ENCODE measurements at regions of chr5 and their contacts with region 1.

Region 1: DNA sequence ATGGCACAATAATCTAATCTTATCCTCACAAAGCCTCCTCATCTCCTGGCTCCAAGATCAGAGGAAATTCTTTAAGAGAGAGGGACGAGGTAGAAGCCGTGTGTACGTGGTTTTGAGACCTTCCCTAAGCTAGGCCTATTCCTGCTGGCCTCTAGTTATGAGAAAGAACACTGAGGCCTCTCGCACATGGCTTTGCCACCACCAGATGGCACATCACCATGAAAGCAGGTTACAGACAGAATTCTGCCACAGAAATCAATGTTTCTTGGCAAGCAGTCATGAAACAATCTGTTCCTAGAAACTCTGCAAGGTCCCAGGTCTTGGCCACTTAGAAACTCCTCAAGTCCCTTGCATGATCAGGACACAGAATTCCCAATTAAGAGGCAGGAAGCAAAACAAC is 268.2 kb upstream of the TAS2R1 start:
- DNase-seq: peak in 1 of 2 experiments; percentile 47
- H3K4me3 ChIP-seq: no peak overlapping the region
- H3K27ac ChIP-seq: no peak overlapping the region
- H3K4me1 ChIP-seq: peaks cover 0 to 7% (median 0%) of the 10 kb centered on the region in 4 experiments; a peak in 1 of 7 replicates
- H3K27me3 ChIP-seq: no peaks in the 10 kb centered on the region
- CTCF ChIP-seq: peak; percentile 50 to 79 (median 75)
- EP300 ChIP-seq: no peak
- POLR2A ChIP-seq: no peak
- RAD21 ChIP-seq: peak; percentile 64 to 67

Region 2: DNA sequence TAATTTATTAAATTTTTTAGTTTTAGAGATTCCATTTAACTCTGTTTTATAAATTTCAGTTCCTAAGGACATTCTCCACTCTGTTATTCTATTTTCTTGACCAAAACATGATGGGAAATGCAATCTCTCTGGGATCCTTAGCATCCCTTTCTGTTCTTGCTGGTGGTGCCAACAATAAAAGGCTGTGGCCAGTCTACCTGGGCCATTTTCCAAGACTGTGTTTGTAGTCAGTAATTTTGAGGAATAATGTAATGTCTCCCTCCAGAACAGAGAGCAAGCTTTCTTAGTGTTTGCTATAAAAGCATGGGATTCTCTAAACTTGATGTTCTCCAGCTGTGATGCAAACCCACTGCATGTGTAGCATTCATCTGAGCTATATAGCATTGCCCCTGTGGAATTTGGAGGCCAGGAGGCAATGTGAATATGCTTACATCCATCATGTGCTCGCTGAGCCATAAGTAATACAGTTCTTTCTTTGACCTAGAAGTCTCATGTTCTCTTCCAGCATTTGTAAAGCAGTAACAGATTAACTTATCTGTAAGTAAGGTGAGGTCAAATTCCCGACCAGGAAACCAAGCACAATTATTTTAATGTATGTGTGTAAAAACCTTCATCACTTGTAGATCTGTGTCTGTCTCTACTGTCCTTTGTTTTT is 56.7 kb before region 1 on chr5:
- CTCF ChIA-PET with region 1: no interaction called
- POLR2A ChIA-PET with region 1: no interaction called
- DNase-seq: no peak
- H3K4me3 ChIP-seq: no peak overlapping the region
- H3K27ac ChIP-seq: no peak overlapping the region
- H3K4me1 ChIP-seq: no peaks in the 10 kb centered on the region
- H3K27me3 ChIP-seq: no peaks in the 10 kb centered on the region
- CTCF ChIP-seq: no peak
- EP300 ChIP-seq: no peak
- POLR2A ChIP-seq: no peak
- RAD21 ChIP-seq: no peak

Region 3: GRCh38 chr5:9916177-9916576 is 17.9 kb after region 1 on chr5:
- CTCF ChIA-PET with region 1: interaction called, 24 read pairs
- POLR2A ChIA-PET with region 1: no interaction called
- DNase-seq: no peak
- H3K4me3 ChIP-seq: no peak overlapping the region
- H3K27ac ChIP-seq: no peak overlapping the region
- H3K4me1 ChIP-seq: no peaks in the 10 kb centered on the region
- H3K27me3 ChIP-seq: no peaks in the 10 kb centered on the region
- CTCF ChIP-seq: no peak
- EP300 ChIP-seq: no peak
- POLR2A ChIP-seq: no peak
- RAD21 ChIP-seq: no peak

Region 4: DNA sequence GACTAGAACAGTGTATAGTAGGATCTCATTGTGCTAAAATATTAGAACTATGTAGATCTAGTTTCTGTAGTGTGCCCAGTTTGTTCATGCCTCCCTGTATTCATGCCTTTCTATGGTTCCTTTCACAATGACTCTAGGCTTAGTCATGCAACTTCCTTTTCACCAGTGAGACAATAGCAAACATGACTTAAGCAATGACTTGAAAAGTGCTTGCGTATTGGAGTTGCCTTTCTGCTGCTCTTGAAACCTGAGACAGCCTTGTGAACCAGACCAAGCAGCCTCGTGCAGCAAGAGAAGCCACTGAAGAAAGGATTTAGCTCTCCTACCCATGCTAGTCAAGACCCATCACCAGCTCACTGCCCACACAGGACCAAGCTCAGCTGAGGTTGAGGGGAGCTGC is 26.3 kb after region 1 on chr5:
- CTCF ChIA-PET with region 1: interaction called, 24 read pairs
- POLR2A ChIA-PET with region 1: no interaction called
- DNase-seq: no peak
- H3K4me3 ChIP-seq: no peak overlapping the region
- H3K27ac ChIP-seq: no peak overlapping the region
- H3K4me1 ChIP-seq: peaks cover 0 to 8% (median 1%) of the 10 kb centered on the region in 4 experiments; a peak in 4 of 7 replicates
- H3K27me3 ChIP-seq: peaks cover 0 to 1% (median 0%) of the 10 kb centered on the region in 4 experiments; a peak in 2 of 7 replicates
- CTCF ChIP-seq: no peak
- EP300 ChIP-seq: no peak
- POLR2A ChIP-seq: no peak
- RAD21 ChIP-seq: no peak

Region 5: GRCh38 chr5:10111571-10111970 is 213.3 kb after region 1 on chr5:
- CTCF ChIA-PET with region 1: interaction called, 14 read pairs
- POLR2A ChIA-PET with region 1: no interaction called
- DNase-seq: peak in 1 of 2 experiments; percentile 68
- H3K4me3 ChIP-seq: no peak overlapping the region
- H3K27ac ChIP-seq: no peak overlapping the region
- H3K4me1 ChIP-seq: no peaks in the 10 kb centered on the region
- H3K27me3 ChIP-seq: no peaks in the 10 kb centered on the region; a peak in 1 of 7 replicates
- CTCF ChIP-seq: peak; percentile 43 to 87 (median 79)
- EP300 ChIP-seq: no peak
- POLR2A ChIP-seq: no peak
- RAD21 ChIP-seq: peak; percentile 77 to 83